Heart right ventricle (tissue), 16 donors: ENCODE measurements at regions of chr4 and their contacts with region 1.

Region 1: GRCh38 chr4:55791666-55792065 is 27.9 kb upstream of the EXOC1L start:
- DNase-seq: no peak
- ATAC-seq: no peak
- H3K4me3 ChIP-seq: no peak overlapping the region
- H3K27ac ChIP-seq: no peak overlapping the region
- H3K4me1 ChIP-seq: peaks cover 0 to 7% (median 0%) of the 10 kb centered on the region in 9 donors
- H3K27me3 ChIP-seq: peaks cover 0 to 78% (median 58%) of the 10 kb centered on the region in 7 donors
- CTCF ChIP-seq: no peak

Region 2: DNA sequence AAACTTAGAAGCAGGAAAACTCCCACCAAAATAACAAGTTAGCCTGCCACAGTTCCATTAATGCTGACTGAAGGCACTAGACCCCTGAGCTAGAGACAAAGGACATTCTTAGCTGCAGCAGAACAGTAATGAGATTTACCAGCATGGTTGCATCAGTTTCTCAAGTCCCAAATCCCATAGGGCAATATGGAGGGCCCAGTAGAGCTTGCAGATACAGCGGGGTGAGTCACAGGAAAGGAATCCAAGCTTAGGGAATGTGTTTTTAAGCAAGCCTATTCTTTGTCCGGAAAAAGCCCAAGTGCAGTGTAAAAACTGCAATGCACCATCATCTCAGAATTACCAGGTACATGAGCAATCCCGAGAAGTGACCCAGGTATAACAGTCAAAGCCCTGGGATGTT is 23.4 kb before region 1 on chr4:
- intact Hi-C with region 1: loop called in 1 of 10 experiments (anchors 2 kb)
- DNase-seq: no peak
- ATAC-seq: peak in 1 of 8 donors; percentile 73
- H3K4me3 ChIP-seq: no peak overlapping the region
- H3K27ac ChIP-seq: no peak overlapping the region
- H3K4me1 ChIP-seq: peaks cover 0 to 10% (median 0%) of the 10 kb centered on the region in 9 donors
- H3K27me3 ChIP-seq: peaks cover 0 to 6% (median 0%) of the 10 kb centered on the region in 7 donors
- CTCF ChIP-seq: no peak

Region 3: GRCh38 chr4:55876387-55876786 is 84.7 kb after region 1 on chr4:
- intact Hi-C with region 1: no loop called
- DNase-seq: no peak
- ATAC-seq: peak in 1 of 8 donors; percentile 35
- H3K4me3 ChIP-seq: no peak overlapping the region
- H3K27ac ChIP-seq: no peak overlapping the region
- H3K4me1 ChIP-seq: peaks cover 0 to 10% (median 0%) of the 10 kb centered on the region in 9 donors
- H3K27me3 ChIP-seq: no peaks in the 10 kb centered on the region
- CTCF ChIP-seq: no peak

Region 4: GRCh38 chr4:56038487-56039148 is 247.0 kb after region 1 on chr4:
- intact Hi-C with region 1: no loop called
- DNase-seq: no peak
- ATAC-seq: no peak
- H3K4me3 ChIP-seq: no peak overlapping the region
- H3K27ac ChIP-seq: no peak overlapping the region
- H3K4me1 ChIP-seq: no peaks in the 10 kb centered on the region
- H3K27me3 ChIP-seq: peaks cover 0 to 22% (median 3%) of the 10 kb centered on the region in 7 donors
- CTCF ChIP-seq: no peak

Region 5: GRCh38 chr4:56245547-56246232 is 454.0 kb after region 1 on chr4:
- intact Hi-C with region 1: no loop called
- DNase-seq: no peak
- ATAC-seq: no peak
- H3K4me3 ChIP-seq: no peak overlapping the region
- H3K27ac ChIP-seq: no peak overlapping the region
- H3K4me1 ChIP-seq: no peaks in the 10 kb centered on the region
- H3K27me3 ChIP-seq: peaks cover 0 to 2% (median 0%) of the 10 kb centered on the region in 7 donors
- CTCF ChIP-seq: no peak